ENCODE measurements at regions of chrX and their contacts with region 1.

Region 1: DNA sequence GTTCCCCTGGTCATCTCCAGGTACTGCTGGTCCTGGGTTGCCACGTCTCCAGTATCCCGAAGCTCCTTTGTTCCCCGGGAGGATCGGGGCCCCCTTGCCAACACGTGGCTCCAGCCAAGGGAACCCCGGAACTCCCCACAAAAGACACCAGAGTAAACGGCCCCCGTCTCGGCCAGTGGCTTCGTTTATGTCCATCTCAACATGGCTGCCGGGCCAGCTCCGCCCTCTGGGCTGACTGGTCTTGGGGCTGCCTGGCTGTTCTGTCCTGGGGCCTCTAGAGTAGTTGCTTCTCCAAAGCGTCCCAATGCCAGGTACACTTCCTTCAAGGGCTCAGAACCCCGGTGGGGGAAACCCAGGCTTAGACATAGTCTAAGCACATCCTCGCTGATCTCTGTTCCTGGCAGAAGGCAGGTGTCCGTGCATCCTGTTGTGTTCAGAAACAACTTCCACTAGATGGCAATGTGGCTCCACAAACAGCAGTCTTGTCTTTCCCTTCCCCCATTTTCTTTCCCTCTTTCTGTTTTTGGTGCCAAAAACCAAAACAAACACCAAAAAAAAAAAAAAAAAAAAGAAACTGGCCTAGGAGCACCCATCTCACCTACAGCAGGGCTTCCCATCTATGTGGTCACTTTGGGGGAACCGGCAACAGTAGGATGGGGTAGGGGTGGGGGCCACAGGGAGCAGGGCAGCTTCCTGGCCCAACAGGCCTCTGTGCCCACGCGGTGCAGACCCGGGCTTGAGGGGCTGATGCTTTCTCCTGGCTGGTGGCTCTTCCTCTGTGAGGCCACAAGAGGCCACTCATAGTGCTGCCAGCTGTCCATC is 35.3 kb downstream of the NBDY start:
- DNase-seq: peak; percentile 65
- CTCF ChIP-seq: peak; percentile 36

Region 2: DNA sequence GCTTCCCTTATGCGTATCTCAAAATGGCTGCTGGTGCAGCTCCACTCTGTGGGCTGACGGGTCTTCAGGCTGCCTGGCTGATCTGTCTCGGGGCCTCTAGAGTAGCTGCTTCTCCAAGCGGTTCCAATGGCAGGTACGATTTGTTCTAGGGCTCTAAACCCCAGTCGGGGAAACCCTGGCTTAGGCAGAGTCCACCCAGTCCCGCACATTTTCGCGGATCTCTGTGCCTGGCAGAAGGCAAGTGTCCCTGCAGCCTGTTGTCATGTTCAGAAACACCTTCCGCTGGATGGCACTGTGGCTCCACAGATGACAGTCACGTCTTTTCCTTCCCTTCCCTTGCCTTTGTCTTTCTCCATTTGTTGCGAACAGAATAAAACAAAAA is 19.1 kb after region 1 on chrX:
- CTCF ChIA-PET with region 1: no interaction called
- POLR2A ChIA-PET with region 1: no interaction called
- DNase-seq: no peak
- CTCF ChIP-seq: no peak

Region 3: GRCh38 chrX:56978172-56978571 is 213.8 kb after region 1 on chrX:
- CTCF ChIA-PET with region 1: interaction called, 29 read pairs
- POLR2A ChIA-PET with region 1: no interaction called
- DNase-seq: peak; percentile 39
- CTCF ChIP-seq: peak; percentile 50